ENCODE measurements at regions of chr2 and their contacts with region 1.

Region 1: GRCh38 chr2:234135720-234136221 is 85.3 kb downstream of the SPP2 start:
- DNase-seq: peak; percentile 73
- H3K4me3 ChIP-seq: no peak overlapping the region
- H3K27ac ChIP-seq: no peak overlapping the region
- H3K4me1 ChIP-seq: peaks cover 16% of the 10 kb centered on the region
- H3K27me3 ChIP-seq: peaks cover 3 to 9% of the 10 kb centered on the region in 2 experiments
- CTCF ChIP-seq: peak; percentile 68 to 79
- POLR2A ChIP-seq: no peak

Region 2: GRCh38 chr2:233999182-233999581 is 136.6 kb before region 1 on chr2:
- CTCF ChIA-PET with region 1: no interaction called
- POLR2A ChIA-PET with region 1: no interaction called
- dilution Hi-C with region 1: no loop called
- intact Hi-C with region 1: no loop called
- DNase-seq: no peak
- H3K4me3 ChIP-seq: no peak overlapping the region
- H3K27ac ChIP-seq: no peak overlapping the region
- H3K4me1 ChIP-seq: no peaks in the 10 kb centered on the region
- H3K27me3 ChIP-seq: peaks cover 0 to 3% of the 10 kb centered on the region in 2 experiments
- CTCF ChIP-seq: no peak
- POLR2A ChIP-seq: no peak

Region 3: DNA sequence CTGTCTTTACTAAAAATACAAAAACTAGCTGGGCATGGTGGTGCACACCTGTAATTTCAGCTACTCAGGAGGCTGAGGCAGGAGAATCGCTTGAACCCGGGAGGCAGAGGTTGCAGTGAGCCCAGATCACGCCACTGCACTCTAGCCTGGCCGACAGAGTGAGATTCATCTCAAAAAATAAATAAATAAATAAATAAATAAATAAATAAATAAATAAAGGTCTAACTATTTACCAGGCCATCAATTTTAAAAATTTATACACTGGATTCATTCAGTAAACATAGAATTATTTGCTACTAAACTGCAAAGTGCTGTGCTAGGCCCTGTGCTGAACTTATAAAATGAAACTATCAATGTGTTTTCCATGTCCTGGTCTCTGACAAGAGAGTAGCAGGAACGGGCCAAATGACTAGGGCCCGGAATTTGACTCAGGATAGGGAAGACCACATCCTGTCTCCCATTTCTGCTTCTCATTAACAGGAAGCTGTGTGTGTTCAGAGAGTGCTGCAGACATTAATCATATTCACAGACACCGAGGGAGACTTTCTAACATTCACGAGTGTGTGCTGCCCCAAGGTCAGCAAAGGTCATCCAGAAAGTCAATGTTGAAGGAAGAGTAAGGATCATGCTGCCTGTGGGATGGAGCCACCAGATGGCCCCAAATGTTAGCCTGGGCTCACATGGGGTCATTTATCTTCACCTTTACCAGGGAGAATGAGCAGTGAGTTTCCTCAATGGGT is 10.5 kb after region 1 on chr2:
- CTCF ChIA-PET with region 1: interaction called, 18 read pairs
- POLR2A ChIA-PET with region 1: no interaction called
- dilution Hi-C with region 1: no loop called
- intact Hi-C with region 1: loop called (anchors 1 kb)
- DNase-seq: peak; percentile 78
- H3K4me3 ChIP-seq: no peak overlapping the region
- H3K27ac ChIP-seq: peak overlapping the region; percentile 78
- H3K4me1 ChIP-seq: peaks cover 10% of the 10 kb centered on the region
- H3K27me3 ChIP-seq: no peaks in the 10 kb centered on the region
- CTCF ChIP-seq: no peak
- POLR2A ChIP-seq: no peak

Region 4: DNA sequence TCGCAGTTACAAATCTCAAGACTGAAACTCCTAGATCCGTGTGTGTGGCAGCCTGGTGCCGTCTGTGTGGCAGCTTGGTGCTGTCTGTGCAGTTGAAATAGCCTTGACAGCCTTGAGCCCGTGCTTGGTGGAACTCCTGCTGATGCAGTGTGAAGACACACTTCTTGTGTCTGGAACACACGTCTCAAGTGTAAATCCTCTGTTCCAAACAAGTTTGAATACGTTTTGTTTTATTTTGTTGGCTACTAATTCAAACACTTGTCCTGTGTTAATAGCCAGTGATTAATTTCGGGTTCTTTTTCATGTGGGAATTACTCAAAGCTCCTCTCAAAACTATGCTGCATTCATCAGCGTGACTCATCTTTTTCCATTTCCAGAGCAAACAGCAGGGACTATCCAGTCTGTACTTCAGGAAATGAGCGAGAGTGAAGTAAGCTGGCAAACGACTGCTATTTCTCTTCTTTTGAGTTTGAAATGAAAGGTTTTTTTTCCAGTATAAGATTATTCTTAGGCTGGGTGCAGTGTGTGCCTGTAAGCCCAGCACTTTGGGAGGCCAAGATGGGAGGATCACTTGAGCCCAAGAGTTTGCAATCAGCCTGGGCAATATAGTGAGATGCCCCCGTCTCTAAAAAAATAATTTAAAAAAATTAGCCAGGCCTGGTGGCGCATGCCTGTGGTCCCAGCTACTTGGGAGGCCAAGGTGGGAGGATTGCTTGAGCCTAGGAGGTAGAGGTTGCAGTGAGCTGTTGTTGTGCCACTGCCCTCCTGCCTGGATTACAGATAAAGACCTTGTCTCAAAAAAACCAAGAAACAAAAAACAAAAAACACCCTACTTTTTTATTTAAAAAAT is 67.6 kb after region 1 on chr2:
- CTCF ChIA-PET with region 1: interaction called, 8 read pairs
- POLR2A ChIA-PET with region 1: no interaction called
- dilution Hi-C with region 1: no loop called
- intact Hi-C with region 1: loop called (anchors 1 kb)
- DNase-seq: peak; percentile 98
- H3K4me3 ChIP-seq: peak overlapping the region in 1 of 3 experiments; percentile 14
- H3K27ac ChIP-seq: peak overlapping the region; percentile 93
- H3K4me1 ChIP-seq: peaks cover 17% of the 10 kb centered on the region
- H3K27me3 ChIP-seq: no peaks in the 10 kb centered on the region
- CTCF ChIP-seq: no peak
- POLR2A ChIP-seq: no peak

Region 5: GRCh38 chr2:234257856-234258561 is 122.2 kb after region 1 on chr2:
- CTCF ChIA-PET with region 1: interaction called, 38 read pairs
- POLR2A ChIA-PET with region 1: no interaction called
- dilution Hi-C with region 1: no loop called
- intact Hi-C with region 1: loop called (anchors 1 kb)
- DNase-seq: peak; percentile 96
- H3K4me3 ChIP-seq: no peak overlapping the region
- H3K27ac ChIP-seq: peak overlapping the region; percentile 70
- H3K4me1 ChIP-seq: peaks cover 11% of the 10 kb centered on the region
- H3K27me3 ChIP-seq: no peaks in the 10 kb centered on the region
- CTCF ChIP-seq: peak; percentile 84 to 87
- POLR2A ChIP-seq: peak; percentile 37

Region 6: GRCh38 chr2:234300391-234300925 is 164.7 kb after region 1 on chr2:
- CTCF ChIA-PET with region 1: interaction called, 10 read pairs
- POLR2A ChIA-PET with region 1: no interaction called
- dilution Hi-C with region 1: no loop called
- intact Hi-C with region 1: no loop called
- DNase-seq: no peak
- H3K4me3 ChIP-seq: no peak overlapping the region
- H3K27ac ChIP-seq: no peak overlapping the region
- H3K4me1 ChIP-seq: no peaks in the 10 kb centered on the region
- H3K27me3 ChIP-seq: peaks cover 4 to 7% of the 10 kb centered on the region in 2 experiments
- CTCF ChIP-seq: no peak
- POLR2A ChIP-seq: no peak

Region 7: DNA sequence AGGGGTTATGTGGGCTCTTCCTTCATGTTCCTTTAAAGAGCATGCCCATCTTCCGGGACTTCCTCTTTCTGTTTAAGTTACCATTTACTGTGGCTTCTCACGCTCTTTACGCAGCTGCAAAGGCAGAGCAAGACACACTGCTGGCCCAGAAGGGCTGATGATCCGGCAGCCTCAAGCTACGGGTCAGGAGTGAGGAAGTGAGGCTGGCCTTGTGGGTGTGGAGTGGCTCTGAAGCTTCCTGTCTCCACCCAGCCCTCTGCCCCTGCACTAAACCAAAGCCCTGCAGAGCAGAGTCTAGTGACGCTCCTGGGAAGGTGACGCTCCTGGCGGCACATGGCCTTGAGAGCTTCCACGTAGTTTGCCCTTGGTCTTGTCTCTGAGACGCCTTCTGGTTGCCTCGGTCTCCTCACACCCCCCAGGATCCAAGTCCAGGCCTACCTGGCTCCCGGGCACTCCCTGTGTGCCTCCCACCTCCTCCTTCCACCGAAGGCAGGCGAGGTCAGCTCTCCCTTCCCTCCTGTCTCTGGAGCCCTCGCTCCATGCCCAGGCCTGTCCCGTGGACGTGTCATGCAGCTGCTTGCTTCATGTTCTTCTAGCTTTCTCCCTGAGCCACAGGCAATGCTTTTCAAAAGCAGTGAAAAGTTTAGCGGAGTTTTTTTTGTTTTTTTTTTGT is 310.8 kb after region 1 on chr2:
- CTCF ChIA-PET with region 1: no interaction called
- POLR2A ChIA-PET with region 1: no interaction called
- dilution Hi-C with region 1: no loop called
- intact Hi-C with region 1: loop called (anchors 1 kb)
- DNase-seq: peak; percentile 52
- H3K4me3 ChIP-seq: no peak overlapping the region
- H3K27ac ChIP-seq: peak overlapping the region; percentile 2
- H3K4me1 ChIP-seq: peaks cover 26% of the 10 kb centered on the region
- H3K27me3 ChIP-seq: no peaks in the 10 kb centered on the region
- CTCF ChIP-seq: no peak
- POLR2A ChIP-seq: no peak

Region 8: GRCh38 chr2:234544659-234545611 is 409.2 kb after region 1 on chr2:
- CTCF ChIA-PET with region 1: interaction called, 134 read pairs
- POLR2A ChIA-PET with region 1: no interaction called
- dilution Hi-C with region 1: no loop called
- intact Hi-C with region 1: loop called (anchors 1 kb)
- DNase-seq: peak; percentile 38
- H3K4me3 ChIP-seq: no peak overlapping the region
- H3K27ac ChIP-seq: no peak overlapping the region
- H3K4me1 ChIP-seq: peaks cover 6% of the 10 kb centered on the region
- H3K27me3 ChIP-seq: peaks cover 0 to 6% of the 10 kb centered on the region in 2 experiments
- CTCF ChIP-seq: peak; percentile 71 to 96
- POLR2A ChIP-seq: no peak

Measured in endothelial cell of umbilical vein (primary cell).